Endothelial cell of umbilical vein (primary cell): ENCODE measurements at regions of chr7 and their contacts with region 1.

Region 1: DNA sequence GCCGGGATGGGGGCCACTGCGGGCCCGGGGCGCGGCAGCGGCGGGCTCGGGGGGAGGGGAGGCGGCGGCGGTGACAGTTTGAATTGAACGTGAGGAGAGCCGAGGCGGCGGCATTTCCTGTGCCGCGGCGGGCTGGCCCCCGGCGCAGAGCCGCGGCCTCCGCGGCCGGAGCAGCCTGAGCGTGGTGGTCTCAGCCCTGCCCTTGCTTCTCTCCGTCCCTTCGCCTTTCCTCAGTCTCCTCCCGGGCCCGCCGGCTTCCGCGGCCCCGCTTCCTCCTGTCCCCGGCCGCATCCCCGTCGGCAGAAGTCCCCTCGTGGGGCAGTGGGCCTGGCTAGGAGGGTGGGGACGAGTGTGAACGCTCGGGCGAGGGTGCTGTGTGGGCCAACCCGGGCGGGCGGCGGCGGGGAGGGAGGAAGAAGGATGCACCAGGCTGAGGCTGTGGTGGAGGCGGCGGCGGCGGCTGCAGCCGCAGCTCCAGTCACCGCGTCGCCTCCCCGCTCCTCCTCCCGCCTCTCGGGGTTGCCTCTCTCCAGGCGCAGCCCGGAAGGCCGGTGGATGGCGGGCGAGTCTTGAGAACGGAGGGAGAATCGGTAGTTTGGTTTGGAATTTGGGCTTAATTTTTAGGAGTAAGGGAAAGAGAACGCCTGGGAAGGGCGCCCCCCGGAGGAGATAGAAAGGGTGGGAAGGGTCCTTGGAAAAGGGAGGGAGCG is 690 bp downstream of the SEPTIN7 start:
- DNase-seq: peak; percentile 71
- H3K4me3 ChIP-seq: peak overlapping the region; percentile 61 to 97 (median 76)
- H3K27ac ChIP-seq: peak overlapping the region; percentile 53
- H3K4me1 ChIP-seq: peaks cover 20% of the 10 kb centered on the region
- H3K27me3 ChIP-seq: no peaks in the 10 kb centered on the region
- CTCF ChIP-seq: peak; percentile 50 to 60
- POLR2A ChIP-seq: peak; percentile 58

Region 2: DNA sequence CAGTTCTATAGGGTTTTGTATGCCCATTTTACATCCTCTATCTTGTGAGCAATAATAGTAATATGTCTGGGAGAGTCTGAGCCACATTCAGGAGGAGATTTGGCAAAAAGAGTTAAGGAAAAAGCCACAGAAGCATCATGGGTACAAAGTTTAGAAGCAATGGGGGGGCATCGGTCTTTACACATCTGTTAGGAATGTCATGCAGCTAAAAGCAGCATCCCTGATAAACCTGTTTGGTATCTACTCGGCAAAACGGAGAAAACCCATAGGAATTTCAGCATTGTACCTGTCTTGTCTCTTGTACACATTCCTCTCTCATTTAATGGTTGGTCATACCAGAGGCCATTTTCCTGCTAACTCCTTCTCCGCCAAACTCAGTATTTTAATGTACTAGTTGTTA is 94.1 kb before region 1 on chr7:
- CTCF ChIA-PET with region 1: interaction called, 38 read pairs
- POLR2A ChIA-PET with region 1: interaction called, 3 read pairs
- dilution Hi-C with region 1: no loop called
- intact Hi-C with region 1: loop called (anchors 1 kb)
- DNase-seq: no peak
- H3K4me3 ChIP-seq: no peak overlapping the region
- H3K27ac ChIP-seq: no peak overlapping the region
- H3K4me1 ChIP-seq: peaks cover 6% of the 10 kb centered on the region
- H3K27me3 ChIP-seq: no peaks in the 10 kb centered on the region
- CTCF ChIP-seq: no peak
- POLR2A ChIP-seq: no peak

Region 3: GRCh38 chr7:35781200-35781701 is 20.3 kb before region 1 on chr7:
- CTCF ChIA-PET with region 1: no interaction called
- POLR2A ChIA-PET with region 1: no interaction called
- dilution Hi-C with region 1: no loop called
- intact Hi-C with region 1: no loop called
- DNase-seq: no peak
- H3K4me3 ChIP-seq: no peak overlapping the region
- H3K27ac ChIP-seq: no peak overlapping the region
- H3K4me1 ChIP-seq: no peaks in the 10 kb centered on the region
- H3K27me3 ChIP-seq: peaks cover 5 to 6% of the 10 kb centered on the region in 2 experiments
- CTCF ChIP-seq: no peak
- POLR2A ChIP-seq: no peak

Region 4: DNA sequence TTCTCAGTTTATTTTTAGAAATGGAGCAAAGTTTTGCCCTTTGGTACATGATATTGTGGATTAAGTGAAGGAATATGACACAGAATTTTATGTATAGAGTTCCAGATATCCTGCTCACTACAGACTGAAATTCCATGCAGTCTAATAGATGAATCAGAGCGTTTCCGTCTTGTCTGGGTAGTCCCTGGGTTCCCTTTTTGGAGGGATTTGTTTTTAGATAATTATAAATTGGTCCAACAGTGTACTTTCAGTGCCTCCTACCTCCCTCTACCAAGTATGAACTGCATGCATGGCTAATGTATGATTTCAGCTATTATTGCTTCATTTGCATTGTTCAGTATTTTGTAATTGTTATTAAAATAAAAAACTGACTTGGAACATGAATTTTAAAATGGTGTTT is 73.7 kb after region 1 on chr7:
- CTCF ChIA-PET with region 1: interaction called, 4 read pairs
- POLR2A ChIA-PET with region 1: no interaction called
- dilution Hi-C with region 1: no loop called
- intact Hi-C with region 1: loop called (anchors 5 kb)
- DNase-seq: no peak
- H3K4me3 ChIP-seq: no peak overlapping the region
- H3K27ac ChIP-seq: no peak overlapping the region
- H3K4me1 ChIP-seq: peaks cover 4% of the 10 kb centered on the region
- H3K27me3 ChIP-seq: no peaks in the 10 kb centered on the region
- CTCF ChIP-seq: no peak
- POLR2A ChIP-seq: no peak

Region 5: DNA sequence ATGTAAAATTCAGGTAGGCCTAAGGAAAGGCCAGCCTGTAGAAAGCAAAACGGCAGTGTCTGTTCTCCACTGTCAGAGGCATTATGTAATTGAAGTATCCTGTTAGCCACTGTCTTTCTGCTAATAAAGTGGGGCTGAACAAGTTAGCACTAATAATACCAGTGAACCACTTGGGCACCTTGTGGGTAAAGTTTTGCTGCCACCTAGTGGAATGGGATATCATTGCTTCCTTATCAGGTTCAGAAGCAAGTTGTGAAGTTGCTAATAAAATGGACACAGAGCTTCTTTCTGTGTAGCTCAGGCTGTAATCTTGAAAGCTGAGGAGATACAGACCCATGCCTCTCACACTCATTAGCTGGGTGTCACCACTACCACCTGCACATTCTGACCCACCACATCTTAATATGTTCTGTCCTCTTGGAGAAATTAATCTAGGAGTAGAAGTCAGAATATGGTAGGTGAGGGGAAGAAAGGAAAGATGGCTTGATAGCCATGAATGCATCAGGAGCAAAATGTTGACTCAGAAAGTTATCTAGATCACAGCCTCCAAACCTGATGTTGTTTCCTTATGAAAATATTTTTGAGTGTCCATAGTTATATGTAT is 174.4 kb after region 1 on chr7:
- CTCF ChIA-PET with region 1: no interaction called
- POLR2A ChIA-PET with region 1: no interaction called
- dilution Hi-C with region 1: no loop called
- intact Hi-C with region 1: loop called (anchors 10 kb)
- DNase-seq: peak; percentile 78
- H3K4me3 ChIP-seq: no peak overlapping the region
- H3K27ac ChIP-seq: no peak overlapping the region
- H3K4me1 ChIP-seq: no peaks in the 10 kb centered on the region
- H3K27me3 ChIP-seq: peaks cover 3 to 7% of the 10 kb centered on the region in 2 experiments
- CTCF ChIP-seq: peak; percentile 55 to 69
- POLR2A ChIP-seq: no peak

Region 6: GRCh38 chr7:36084475-36085097 is 283.0 kb after region 1 on chr7:
- CTCF ChIA-PET with region 1: no interaction called
- POLR2A ChIA-PET with region 1: no interaction called
- dilution Hi-C with region 1: no loop called
- intact Hi-C with region 1: no loop called
- DNase-seq: no peak
- H3K4me3 ChIP-seq: no peak overlapping the region
- H3K27ac ChIP-seq: no peak overlapping the region
- H3K4me1 ChIP-seq: no peaks in the 10 kb centered on the region
- H3K27me3 ChIP-seq: peaks cover 0 to 5% of the 10 kb centered on the region in 2 experiments
- CTCF ChIP-seq: no peak
- POLR2A ChIP-seq: no peak